ENCODE measurements at regions of chr11 and their contacts with region 1.

Region 1: GRCh38 chr11:44936525-44936924 is 14.2 kb downstream of the TP53I11 start:
- DNase-seq: peak; percentile 72 to 79 (median 74)
- H3K4me3 ChIP-seq: no peak overlapping the region
- H3K4me3 Mint-ChIP-seq: no peak overlapping the region
- H3K27ac ChIP-seq: no peak overlapping the region
- H3K27ac Mint-ChIP-seq: no peak overlapping the region
- H3K4me1 ChIP-seq: peaks cover 5% of the 10 kb centered on the region
- H3K4me1 Mint-ChIP-seq: peaks cover 1 to 8% (median 5%) of the 10 kb centered on the region in 4 donors
- H3K27me3 ChIP-seq: no peaks in the 10 kb centered on the region
- H3K27me3 Mint-ChIP-seq: no peaks in the 10 kb centered on the region

Region 2: DNA sequence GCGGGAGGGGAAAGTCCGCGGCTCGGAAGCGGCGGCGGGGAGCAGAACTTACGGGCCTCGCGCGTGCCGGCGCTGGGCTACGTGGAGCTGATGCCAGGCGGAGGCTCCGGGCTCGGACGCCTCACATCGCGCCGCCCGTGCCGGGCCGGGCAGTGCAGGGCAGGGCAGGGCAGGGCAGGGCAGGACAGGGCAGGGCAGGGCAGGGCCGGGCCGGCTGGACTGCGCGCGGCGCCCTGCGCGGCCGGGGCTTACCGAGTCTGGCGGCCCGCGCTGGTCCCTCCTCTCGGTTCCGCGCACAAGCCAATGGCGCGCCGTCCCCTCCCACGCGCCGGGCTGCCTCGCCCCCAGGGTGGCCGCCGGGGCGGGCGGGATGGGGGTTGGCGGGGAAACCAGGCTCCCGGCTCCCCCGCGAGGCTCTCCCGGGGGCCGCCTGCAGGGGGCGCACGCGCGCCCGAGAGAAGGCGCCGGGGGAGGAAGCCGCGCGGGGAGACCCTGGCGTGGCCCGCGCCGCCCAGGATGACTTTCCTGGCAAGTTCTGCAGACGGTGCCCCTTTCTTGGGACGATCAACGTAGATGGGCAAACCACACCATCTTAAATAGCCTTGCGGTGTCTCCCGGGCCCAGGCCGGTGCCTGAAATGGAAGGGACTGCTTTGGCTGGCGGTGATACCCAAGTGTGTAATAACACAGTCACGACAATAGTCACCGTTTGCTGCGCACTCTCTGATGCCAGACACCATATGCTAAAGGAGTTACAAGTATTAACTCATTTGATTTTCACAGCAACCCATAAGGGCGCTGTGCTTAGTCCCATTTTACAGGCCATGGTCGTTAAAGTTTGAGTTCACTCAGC is 14.3 kb after region 1 on chr11 and contains the start of gene TP53I11:
- CTCF ChIA-PET with region 1: interaction called, 51 read pairs
- POLR2A ChIA-PET with region 1: interaction called, 5 read pairs
- intact Hi-C with region 1: no loop called
- DNase-seq: peak; percentile 53 to 57 (median 53)
- H3K4me3 ChIP-seq: peak within 1 kb of the TSS; percentile 36 to 59
- H3K4me3 Mint-ChIP-seq: peak within 1 kb of the TSS; percentile 71 to 87 (median 79)
- H3K27ac ChIP-seq: peak within 1 kb of the TSS; percentile 26
- H3K27ac Mint-ChIP-seq: peak within 1 kb of the TSS in 4 of 7 donors; percentile 14 to 61 (median 42)
- H3K4me1 ChIP-seq: peaks cover 3% of the 10 kb centered on the region
- H3K4me1 Mint-ChIP-seq: peaks cover 0 to 14% (median 3%) of the 10 kb centered on the region in 4 donors
- H3K27me3 ChIP-seq: no peaks in the 10 kb centered on the region
- H3K27me3 Mint-ChIP-seq: no peaks in the 10 kb centered on the region
- total RNA-seq, gene TP53I11: 4.0 to 7.0 TPM

Region 3: DNA sequence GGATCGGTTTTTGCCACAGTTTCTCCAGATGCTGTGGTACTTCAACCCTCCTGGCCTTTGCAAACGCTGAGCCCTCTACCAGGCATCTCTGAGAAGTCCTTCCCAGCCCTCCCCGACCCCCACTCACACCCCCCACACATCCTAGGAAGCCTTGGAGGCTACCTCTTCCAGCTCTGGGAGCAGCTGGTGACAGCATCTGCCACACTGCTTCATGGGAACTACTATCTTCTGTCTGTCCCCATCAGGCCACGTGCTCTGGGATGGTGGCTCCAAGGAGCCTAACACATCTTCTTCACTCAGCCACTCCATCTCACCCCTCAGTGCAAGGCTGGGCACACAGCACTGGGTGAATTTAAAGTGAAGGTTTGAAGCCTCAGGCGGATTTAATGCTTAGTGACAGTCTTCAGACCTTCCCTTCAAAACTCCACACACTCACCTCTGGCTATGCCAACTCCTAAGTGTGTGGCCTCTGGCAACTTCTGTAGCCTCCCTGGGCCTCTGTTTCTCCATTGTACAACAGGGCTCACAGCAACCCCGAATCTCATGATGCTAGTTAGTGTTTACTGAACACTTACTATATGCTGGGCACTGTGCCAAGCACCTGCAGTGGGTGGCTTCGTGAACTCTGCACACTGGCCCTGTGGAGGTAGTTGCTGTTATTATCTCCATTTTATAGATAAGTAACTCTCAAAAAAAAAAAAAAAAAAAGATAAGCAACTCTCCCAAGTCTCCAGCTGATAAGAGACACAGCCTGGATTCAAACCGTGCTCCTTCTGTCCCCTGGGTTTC is 21.4 kb after region 1 on chr11:
- CTCF ChIA-PET with region 1: interaction called, 16 read pairs
- POLR2A ChIA-PET with region 1: no interaction called
- intact Hi-C with region 1: no loop called
- DNase-seq: no peak
- H3K4me3 ChIP-seq: no peak overlapping the region
- H3K4me3 Mint-ChIP-seq: no peak overlapping the region
- H3K27ac ChIP-seq: no peak overlapping the region
- H3K27ac Mint-ChIP-seq: no peak overlapping the region
- H3K4me1 ChIP-seq: no peaks in the 10 kb centered on the region
- H3K4me1 Mint-ChIP-seq: no peaks in the 10 kb centered on the region
- H3K27me3 ChIP-seq: no peaks in the 10 kb centered on the region
- H3K27me3 Mint-ChIP-seq: no peaks in the 10 kb centered on the region

Region 4: GRCh38 chr11:45079943-45080719 is 143.6 kb after region 1 on chr11:
- CTCF ChIA-PET with region 1: interaction called, 49 read pairs
- POLR2A ChIA-PET with region 1: interaction called, 11 read pairs
- intact Hi-C with region 1: no loop called
- DNase-seq: peak; percentile 54 to 76 (median 64)
- H3K4me3 ChIP-seq: peak overlapping the region in 1 of 2 donors; percentile 15
- H3K4me3 Mint-ChIP-seq: peak overlapping the region; percentile 45 to 82 (median 69)
- H3K27ac ChIP-seq: peak overlapping the region; percentile 56
- H3K27ac Mint-ChIP-seq: peak overlapping the region; percentile 83 to 96 (median 91)
- H3K4me1 ChIP-seq: peaks cover 38% of the 10 kb centered on the region
- H3K4me1 Mint-ChIP-seq: peaks cover 31 to 61% (median 48%) of the 10 kb centered on the region in 4 donors
- H3K27me3 ChIP-seq: no peaks in the 10 kb centered on the region
- H3K27me3 Mint-ChIP-seq: no peaks in the 10 kb centered on the region

Region 5: DNA sequence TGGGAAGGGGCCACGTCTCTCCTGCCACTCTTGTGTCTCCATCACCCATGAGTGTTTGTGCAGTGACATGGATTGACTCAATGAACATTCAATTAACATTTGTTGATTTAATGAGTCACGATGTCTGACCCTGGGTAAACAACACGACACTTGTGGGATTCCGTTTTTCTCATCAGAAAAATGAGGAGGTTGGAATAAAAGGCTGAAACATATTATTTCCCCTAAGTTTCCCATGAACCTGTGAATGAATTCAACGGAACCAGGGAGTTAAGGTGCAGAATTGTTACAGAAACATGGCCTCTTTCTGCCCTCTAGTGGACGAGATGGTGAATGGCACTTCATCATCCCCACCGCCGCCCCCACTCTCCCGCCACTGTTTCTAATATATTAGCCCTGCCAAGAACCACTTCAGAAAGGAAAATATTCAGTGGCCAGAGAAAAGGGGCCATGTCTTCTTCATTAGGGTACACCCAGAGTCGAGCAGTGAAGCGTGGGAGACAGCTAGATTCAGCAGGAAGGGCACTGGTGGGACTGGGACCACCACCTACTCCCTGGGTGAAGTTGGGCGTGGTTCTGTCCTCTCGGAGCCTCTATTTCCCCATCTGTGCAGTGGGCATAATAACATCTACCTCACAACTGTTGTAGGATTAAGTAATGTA is 395.9 kb after region 1 on chr11:
- CTCF ChIA-PET with region 1: interaction called, 20 read pairs
- POLR2A ChIA-PET with region 1: no interaction called
- intact Hi-C with region 1: no loop called
- DNase-seq: peak in 4 of 5 donors; percentile 32 to 42 (median 38)
- H3K4me3 ChIP-seq: no peak overlapping the region
- H3K4me3 Mint-ChIP-seq: no peak overlapping the region
- H3K27ac ChIP-seq: no peak overlapping the region
- H3K27ac Mint-ChIP-seq: peak overlapping the region in 1 of 7 donors; percentile 75
- H3K4me1 ChIP-seq: no peaks in the 10 kb centered on the region
- H3K4me1 Mint-ChIP-seq: peaks cover 0 to 1% (median 0%) of the 10 kb centered on the region in 4 donors
- H3K27me3 ChIP-seq: peaks cover 10% of the 10 kb centered on the region
- H3K27me3 Mint-ChIP-seq: peaks cover 11 to 14% of the 10 kb centered on the region in 2 donors